Body of pancreas (tissue), 4 donors: ENCODE measurements at regions of chr1 and their contacts with region 1.

Region 1: DNA sequence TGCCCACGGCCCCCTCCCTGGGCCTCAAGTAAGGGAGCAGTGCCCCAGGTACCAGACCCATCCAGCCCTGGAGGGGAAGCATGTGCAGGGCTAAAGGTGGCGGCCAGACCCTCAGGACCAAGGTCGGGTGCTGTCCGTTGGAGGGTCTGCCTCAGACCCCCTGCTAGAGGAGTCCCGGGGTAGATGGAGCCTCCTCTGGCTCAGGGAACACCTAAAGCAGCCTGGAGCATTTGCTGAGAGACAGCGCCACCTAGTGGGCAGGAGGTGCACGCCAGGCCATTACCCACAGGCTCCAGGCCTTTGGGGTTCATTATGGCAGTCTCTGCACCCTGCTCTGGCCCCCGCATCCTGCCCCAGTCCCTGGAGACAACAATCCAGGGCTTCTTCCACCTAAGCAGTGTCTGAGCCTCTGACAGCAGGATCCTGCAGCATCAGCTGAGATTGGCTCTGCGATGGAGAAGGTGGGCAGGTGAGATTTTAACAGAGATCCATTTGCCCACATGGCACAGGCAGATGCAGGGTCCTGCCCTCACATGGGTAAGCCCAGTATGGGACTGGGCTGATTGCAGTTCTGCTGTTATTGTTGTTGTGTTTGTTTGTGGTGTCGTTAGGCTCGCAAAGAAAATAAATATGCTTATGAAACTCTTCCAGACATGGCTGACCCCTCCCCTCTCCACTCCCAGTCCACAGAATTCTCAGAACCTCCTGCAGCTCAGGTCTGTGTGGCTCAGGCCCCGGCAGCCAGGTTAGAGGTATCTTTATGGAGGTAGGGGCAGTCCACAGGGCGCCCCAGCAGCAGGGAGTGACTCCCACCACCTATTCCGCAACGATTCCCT is 42.4 kb downstream of the CTNNBIP1 start:
- DNase-seq: peak; percentile 78 to 88 (median 83)
- ATAC-seq: peak; percentile 79
- H3K4me3 ChIP-seq: no peak overlapping the region
- H3K27ac ChIP-seq: no peak overlapping the region
- H3K4me1 ChIP-seq: no peaks in the 10 kb centered on the region
- H3K27me3 ChIP-seq: no peaks in the 10 kb centered on the region
- CTCF ChIP-seq: peak; percentile 84 to 97 (median 95)
- POLR2A ChIP-seq: no peak

Region 2: GRCh38 chr1:9588551-9589143 is 279.0 kb before region 1 on chr1 and contains the start of gene TMEM201:
- intact Hi-C with region 1: no loop called
- DNase-seq: peak; percentile 95 to 98 (median 96)
- ATAC-seq: peak; percentile 97
- H3K4me3 ChIP-seq: peak within 1 kb of the TSS; percentile 28 to 65
- H3K27ac ChIP-seq: peak within 1 kb of the TSS; percentile 37 to 70 (median 60)
- H3K4me1 ChIP-seq: peaks cover 27% of the 10 kb centered on the region
- H3K27me3 ChIP-seq: no peaks in the 10 kb centered on the region
- CTCF ChIP-seq: peak; percentile 50 to 96 (median 89)
- POLR2A ChIP-seq: no peak
- total RNA-seq, gene TMEM201: 7.3 to 12.5 TPM

Region 3: DNA sequence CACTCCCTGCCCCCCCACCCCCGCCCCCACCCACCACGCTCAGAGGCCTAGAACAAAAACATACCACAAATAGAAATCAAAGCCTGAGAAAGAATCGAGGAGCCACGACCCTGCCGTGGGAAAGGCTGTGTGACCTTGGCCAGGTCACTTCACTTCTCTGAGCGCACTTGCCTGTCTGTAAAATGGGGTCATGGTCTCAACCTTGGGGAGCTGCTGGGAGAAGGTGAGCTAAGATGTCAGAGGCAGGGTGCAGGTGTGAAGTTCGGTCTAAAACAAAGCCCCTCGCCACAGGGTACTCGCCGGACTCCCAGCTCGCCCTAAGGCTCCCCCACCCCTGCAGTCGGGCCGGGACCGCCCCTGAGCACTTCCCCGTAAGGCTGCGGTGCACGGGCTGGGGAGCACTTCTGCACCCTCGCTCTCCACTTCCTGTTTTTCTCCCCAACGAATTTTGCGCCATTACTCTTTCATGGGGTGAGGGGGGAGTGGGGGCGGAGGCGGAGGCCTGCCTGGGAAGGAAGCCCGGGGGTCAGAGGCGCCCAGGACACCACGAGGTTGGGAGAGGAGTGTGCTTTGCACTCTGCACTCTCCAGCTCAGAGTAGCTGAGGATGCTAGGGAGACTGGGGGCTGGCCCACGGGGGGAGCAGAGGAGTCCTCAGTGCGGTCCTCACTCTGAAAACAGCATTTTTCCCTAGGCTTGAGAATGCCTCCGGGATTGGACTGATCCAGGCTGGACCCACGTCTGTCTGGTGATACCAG is 238.0 kb before region 1 on chr1:
- intact Hi-C with region 1: loop called (anchors 10 kb)
- DNase-seq: peak in 2 of 4 donors; percentile 25 to 60
- ATAC-seq: no peak
- H3K4me3 ChIP-seq: no peak overlapping the region
- H3K27ac ChIP-seq: no peak overlapping the region
- H3K4me1 ChIP-seq: no peaks in the 10 kb centered on the region
- H3K27me3 ChIP-seq: no peaks in the 10 kb centered on the region
- CTCF ChIP-seq: no peak
- POLR2A ChIP-seq: no peak

Region 4: GRCh38 chr1:9784508-9785133 is 83.0 kb before region 1 on chr1:
- intact Hi-C with region 1: loop called (anchors 5 kb)
- DNase-seq: peak; percentile 68 to 78 (median 74)
- ATAC-seq: peak; percentile 75
- H3K4me3 ChIP-seq: no peak overlapping the region
- H3K27ac ChIP-seq: no peak overlapping the region
- H3K4me1 ChIP-seq: peaks cover 3% of the 10 kb centered on the region
- H3K27me3 ChIP-seq: no peaks in the 10 kb centered on the region
- CTCF ChIP-seq: peak; percentile 60 to 87 (median 80)
- POLR2A ChIP-seq: no peak